ENCODE measurements at regions of chr4 and their contacts with region 1.

Region 1: GRCh38 chr4:83124111-83124780 is 9.7 kb upstream of the PLAC8 start:
- H3K4me3 Mint-ChIP-seq: no peak overlapping the region
- H3K27ac Mint-ChIP-seq: peak overlapping the region; percentile 80
- H3K4me1 Mint-ChIP-seq: peaks cover 42% of the 10 kb centered on the region
- H3K27me3 Mint-ChIP-seq: no peaks in the 10 kb centered on the region

Region 2: GRCh38 chr4:83174844-83175414 is 50.7 kb after region 1 on chr4:
- intact Hi-C with region 1: loop called (anchors 10 kb)
- H3K4me3 Mint-ChIP-seq: no peak overlapping the region
- H3K27ac Mint-ChIP-seq: no peak overlapping the region
- H3K4me1 Mint-ChIP-seq: peaks cover 46% of the 10 kb centered on the region
- H3K27me3 Mint-ChIP-seq: peaks cover 8% of the 10 kb centered on the region